Cardiac septum (tissue), 1 donor: ENCODE measurements at regions of chr9 and their contacts with region 1.

Region 1: DNA sequence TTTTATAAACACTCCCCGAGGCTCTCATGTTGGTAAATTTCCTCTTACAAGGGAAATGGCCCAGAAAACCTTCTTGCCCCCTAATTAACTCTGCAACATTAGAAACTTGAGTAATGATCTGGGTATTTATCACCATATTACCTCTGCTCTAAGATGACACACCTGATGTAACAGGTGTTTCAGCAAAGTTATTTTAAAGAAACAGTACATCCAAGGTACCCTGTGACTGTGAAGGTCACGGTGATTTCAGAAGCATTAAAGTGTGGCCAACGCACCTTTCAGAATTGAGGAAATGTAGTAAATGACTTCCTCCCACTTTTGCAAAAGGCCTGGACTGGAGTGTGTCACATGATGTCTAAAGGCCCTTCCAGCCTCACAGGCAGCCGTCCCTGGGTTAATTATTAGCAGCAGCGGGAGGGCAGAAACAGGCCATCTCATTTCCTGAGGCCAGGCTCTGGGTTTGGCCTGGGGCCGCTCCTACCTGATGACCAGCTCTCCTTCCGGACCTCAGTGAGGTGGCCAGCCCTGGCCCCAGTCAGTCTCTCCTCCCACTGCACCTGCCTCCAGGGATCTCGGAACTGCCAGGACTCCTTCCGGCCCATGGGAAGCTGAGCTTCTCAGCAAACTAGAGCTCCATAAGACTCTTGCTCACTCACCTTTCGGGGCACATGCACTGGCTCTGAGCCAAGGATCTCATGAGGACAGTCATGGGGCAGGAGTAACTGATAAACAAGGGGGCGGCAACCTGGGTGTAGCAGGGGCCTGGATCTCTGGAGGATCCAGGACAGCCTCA is 20.7 kb downstream of the PTPN3 start:
- DNase-seq: no peak

Region 2: GRCh38 chr9:109499631-109500410 is 22.4 kb after region 1 on chr9:
- intact Hi-C with region 1: loop called (anchors 2 kb)
- DNase-seq: peak; percentile 80

Region 3: GRCh38 chr9:109542906-109543305 is 65.5 kb after region 1 on chr9:
- intact Hi-C with region 1: no loop called
- DNase-seq: no peak

Region 4: GRCh38 chr9:109745335-109746283 is 268.2 kb after region 1 on chr9:
- intact Hi-C with region 1: no loop called
- DNase-seq: peak; percentile 78